ENCODE measurements at regions of chr20 and their contacts with region 1.

Region 1: DNA sequence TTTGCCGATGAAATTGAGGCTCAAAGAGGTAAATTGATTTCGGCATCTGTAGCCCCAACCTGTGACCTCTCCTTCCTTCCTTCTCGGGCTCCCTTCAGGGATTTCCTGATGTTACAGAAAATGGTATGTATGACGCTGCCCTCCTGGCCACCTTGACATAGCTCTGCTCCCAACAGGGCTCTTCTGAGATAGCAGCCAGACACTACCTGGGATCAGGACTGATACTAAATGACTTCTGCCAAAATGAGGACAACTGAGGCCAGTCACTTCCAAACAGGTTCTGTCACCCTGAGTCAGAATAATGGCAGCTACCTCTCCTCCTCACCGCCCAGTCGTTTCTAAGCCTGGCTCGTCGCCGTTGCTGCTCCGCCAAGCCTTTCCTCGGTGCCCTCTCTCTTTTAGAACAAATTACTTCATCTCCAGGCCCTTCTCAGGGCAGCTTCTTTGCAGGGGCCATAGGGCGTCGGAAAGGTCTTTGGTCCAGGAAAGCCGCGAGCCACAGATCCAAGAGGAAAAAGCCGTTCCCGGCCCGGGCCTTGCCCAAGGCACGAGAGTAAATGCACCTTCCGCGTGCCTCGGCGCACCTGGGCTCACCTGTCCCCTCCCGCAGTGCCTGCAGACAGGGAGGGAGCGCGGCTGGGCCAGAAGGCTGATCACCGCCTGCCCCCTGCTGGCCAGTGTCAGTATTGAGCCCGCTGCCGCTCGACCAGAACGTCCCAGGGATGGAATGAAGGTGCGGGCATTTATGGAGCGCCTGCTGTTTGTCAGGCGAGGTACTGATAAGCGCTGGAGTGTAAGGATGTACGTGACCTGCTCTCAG is 904 bp upstream of the LPIN3 start:
- DNase-seq: peak; percentile 81 to 94 (median 93)
- ATAC-seq: peak; percentile 81 to 82
- H3K4me3 ChIP-seq: peak overlapping the region; percentile 27
- H3K27ac ChIP-seq: peak overlapping the region; percentile 82
- H3K4me1 ChIP-seq: no peaks in the 10 kb centered on the region
- H3K27me3 ChIP-seq: no peaks in the 10 kb centered on the region

Region 2: GRCh38 chr20:40962730-40963504 is 376.8 kb before region 1 on chr20:
- intact Hi-C with region 1: loop called in 1 of 4 experiments (anchors 10 kb)
- DNase-seq: peak; percentile 59 to 80 (median 74)
- ATAC-seq: peak; percentile 75 to 78
- H3K4me3 ChIP-seq: no peak overlapping the region
- H3K27ac ChIP-seq: no peak overlapping the region
- H3K4me1 ChIP-seq: no peaks in the 10 kb centered on the region
- H3K27me3 ChIP-seq: no peaks in the 10 kb centered on the region

Region 3: DNA sequence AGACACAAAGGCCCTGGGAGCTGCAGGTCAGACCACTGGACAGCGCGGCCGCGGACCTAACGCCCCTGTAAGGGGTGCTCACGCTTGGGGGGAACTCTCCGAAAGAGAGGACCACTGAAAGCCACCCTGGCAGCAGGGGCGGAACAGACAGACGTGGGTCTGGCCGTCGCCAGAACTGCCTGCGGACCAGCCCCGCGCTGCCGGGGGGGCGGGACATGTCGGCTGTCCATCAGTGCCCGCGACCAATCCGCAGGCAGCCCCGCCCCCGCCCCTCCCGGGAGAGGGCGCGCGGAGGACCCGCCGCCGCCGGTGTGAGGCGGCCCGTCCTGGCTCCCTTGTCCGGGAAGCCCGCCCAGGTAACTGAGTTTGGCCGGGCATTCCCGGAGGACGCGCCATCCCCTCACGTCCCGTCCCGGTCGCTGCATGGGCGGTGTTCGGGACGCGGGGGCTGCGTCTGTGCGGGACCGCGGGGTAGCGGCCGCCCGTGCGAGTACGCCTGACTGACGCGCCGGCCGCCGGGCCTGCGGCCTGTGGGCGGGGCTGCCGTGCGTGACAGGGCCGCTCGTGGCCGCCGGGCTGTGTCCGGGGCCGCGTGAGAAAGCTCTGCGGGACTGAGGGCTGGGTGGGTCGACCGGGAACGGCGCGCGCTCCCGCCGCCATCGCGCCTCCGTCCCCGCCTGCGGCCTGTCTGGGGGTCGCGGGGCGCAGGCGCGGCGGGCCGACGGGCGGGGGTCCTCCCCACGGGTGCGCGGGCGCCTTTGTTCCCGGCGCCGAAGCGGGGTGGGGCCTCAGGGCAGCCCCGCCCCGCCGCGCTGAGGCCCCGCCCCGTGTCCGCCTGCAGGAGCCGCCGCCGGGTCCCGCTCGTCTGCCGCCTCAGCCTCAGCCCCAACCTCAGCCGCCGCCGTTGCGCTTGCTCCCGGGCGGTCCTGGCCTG is 202.8 kb before region 1 on chr20 and contains the start of gene PLCG1:
- intact Hi-C with region 1: loop called in 2 of 4 experiments (anchors 5 to 10 kb)
- DNase-seq: peak; percentile 92 to 97 (median 96)
- ATAC-seq: peak; percentile 83 to 88
- H3K4me3 ChIP-seq: peak within 1 kb of the TSS; percentile 83
- H3K27ac ChIP-seq: peak within 1 kb of the TSS; percentile 95
- H3K4me1 ChIP-seq: peaks cover 22% of the 10 kb centered on the region
- H3K27me3 ChIP-seq: no peaks in the 10 kb centered on the region
- total RNA-seq, gene PLCG1: 50.1 to 62.2 (median 58.3) TPM

Region 4: DNA sequence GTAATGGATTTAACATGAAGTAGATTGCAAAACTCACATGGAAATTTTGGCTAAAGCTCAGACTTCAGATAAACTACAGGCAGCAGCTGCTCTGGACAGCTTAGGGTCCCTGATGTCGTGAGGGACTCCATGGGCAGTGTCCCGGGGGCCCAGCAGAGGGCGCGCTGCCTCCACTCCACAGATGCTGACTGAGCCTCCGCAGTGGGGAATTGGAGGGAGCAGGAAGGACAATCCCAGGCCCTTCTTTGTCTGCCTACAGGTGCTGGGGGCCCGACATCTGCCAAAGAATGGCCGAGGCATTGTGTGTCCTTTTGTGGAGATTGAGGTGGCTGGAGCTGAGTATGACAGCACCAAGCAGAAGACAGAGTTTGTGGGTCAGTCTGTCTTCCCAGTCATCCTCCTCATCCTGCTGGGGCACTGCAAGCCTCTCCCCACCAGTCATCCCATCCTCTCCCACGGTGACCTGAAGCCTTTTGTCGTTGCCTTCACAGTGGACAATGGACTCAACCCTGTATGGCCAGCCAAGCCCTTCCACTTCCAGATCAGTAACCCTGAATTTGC is 166.5 kb before region 1 on chr20:
- intact Hi-C with region 1: loop called (anchors 2 to 5 kb)
- DNase-seq: peak; percentile 88 to 95 (median 95)
- ATAC-seq: peak; percentile 86 to 90
- H3K4me3 ChIP-seq: no peak overlapping the region
- H3K27ac ChIP-seq: peak overlapping the region; percentile 40
- H3K4me1 ChIP-seq: peaks cover 22% of the 10 kb centered on the region
- H3K27me3 ChIP-seq: no peaks in the 10 kb centered on the region

Region 5: DNA sequence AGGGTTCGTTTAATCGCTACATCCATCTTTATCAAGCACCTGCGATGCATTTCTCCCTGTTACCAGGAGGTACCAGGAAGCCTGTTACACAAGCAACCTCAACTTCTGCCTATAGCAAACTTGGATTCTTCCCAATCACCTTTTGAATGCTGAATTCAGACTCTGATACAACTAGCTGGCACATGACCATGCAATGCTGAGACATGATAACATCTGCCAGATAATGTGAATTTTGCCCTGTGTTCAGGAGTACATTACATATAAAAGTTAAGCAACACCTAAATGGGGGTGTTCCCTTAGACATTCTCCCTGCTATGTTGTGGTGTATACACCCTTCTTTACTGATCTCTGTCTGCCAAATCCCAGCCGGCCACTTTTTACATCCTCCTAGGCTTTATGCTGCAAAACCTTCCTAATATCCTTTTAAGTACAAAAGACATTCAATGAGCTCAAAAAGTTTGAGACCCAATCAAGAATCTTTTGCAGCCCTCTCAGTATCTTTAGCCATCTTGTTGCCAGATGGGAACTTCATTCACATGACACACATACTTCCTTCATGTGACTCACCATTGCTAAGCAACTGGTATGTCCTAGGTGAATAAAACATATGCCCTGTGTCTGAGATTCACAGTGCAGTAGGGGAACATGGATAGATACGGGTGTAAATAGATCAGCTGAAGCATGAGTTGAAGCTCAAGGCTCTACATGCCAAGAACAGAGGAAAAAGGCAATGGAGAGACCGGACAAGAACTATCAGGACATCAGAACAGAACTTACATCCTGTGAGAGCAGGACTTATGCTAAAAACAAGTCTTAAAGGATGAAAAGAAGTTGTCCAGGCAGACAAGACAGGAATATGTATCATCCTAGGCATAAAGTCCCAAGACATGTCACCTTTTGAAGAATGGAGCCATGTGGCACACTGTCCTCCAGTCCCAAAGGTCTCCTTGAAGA is 106.5 kb before region 1 on chr20:
- intact Hi-C with region 1: loop called in 1 of 4 experiments (anchors 5 kb)
- DNase-seq: no peak
- ATAC-seq: peak; percentile 14 to 53
- H3K4me3 ChIP-seq: no peak overlapping the region
- H3K27ac ChIP-seq: peak overlapping the region; percentile 90
- H3K4me1 ChIP-seq: peaks cover 20% of the 10 kb centered on the region
- H3K27me3 ChIP-seq: no peaks in the 10 kb centered on the region

Region 6: DNA sequence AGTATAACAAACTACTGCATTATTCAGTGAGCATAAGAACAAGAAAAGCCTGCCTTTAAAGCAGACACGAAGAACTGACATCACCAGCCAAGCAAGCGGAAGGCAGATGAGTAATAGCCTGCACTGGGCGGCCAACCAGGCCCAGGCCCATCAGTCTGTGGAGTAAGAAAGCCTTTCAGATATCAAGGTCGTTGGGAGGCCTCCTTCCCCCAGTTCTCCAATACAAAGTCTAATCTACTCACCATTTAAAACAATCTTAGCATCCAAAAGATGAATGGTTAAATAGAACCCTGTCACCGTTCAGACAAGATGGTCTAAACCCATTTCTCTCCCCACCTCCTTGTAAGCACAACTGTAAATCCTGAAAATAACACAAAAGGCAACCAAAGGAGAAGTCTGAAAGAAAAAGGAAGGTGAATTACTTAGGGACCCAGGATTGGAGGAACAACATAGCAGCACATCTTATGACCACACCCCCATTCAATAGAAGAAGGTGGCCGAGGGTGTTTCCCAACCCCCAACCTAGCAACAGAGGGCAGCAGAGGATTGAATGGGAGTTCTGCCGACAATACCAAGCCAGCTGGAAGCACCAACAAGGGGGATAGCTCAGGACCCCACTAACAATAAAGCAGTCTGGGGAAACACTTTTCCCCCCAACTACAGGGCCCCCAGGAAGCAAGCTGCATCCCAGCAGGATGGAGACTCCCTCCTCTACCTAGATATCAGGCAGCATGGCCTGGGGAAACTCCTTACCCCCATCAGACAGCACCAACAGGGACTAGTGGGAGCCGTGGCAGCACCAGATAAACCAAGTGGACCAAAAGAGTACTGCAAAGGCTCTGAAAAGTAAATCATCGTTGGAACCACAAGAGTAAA is 90.1 kb before region 1 on chr20:
- intact Hi-C with region 1: loop called in 3 of 4 experiments (anchors 10 kb)
- DNase-seq: peak; percentile 87 to 92 (median 87)
- ATAC-seq: peak; percentile 88 to 93
- H3K4me3 ChIP-seq: no peak overlapping the region
- H3K27ac ChIP-seq: peak overlapping the region; percentile 98
- H3K4me1 ChIP-seq: peaks cover 30% of the 10 kb centered on the region
- H3K27me3 ChIP-seq: no peaks in the 10 kb centered on the region

Region 7: DNA sequence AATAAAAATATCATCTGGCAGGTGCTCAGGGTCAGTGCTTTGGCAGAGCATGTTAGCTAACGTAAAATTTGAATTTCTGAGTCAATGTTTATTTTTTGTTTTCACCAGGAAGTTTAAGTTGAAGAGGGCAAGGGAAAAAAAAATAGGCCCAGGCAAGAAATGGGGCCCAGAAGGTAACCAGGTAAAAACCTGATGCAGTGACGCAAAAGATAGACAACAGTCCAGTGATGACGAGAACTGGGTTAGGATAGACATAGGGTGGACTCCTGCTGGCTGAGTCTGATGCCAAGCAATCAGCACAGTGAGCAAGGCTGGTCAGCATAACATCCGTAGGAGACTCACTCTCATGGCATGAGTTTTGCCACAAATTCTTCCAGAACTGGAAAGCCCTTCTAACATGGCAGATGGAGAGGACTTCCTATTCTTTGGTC is 64.4 kb before region 1 on chr20:
- intact Hi-C with region 1: no loop called
- DNase-seq: no peak
- ATAC-seq: peak in 1 of 2 donors; percentile 31
- H3K4me3 ChIP-seq: no peak overlapping the region
- H3K27ac ChIP-seq: no peak overlapping the region
- H3K4me1 ChIP-seq: peaks cover 10% of the 10 kb centered on the region
- H3K27me3 ChIP-seq: no peaks in the 10 kb centered on the region

Region 8: GRCh38 chr20:41287327-41287726 is 52.4 kb before region 1 on chr20:
- intact Hi-C with region 1: no loop called
- DNase-seq: no peak
- ATAC-seq: peak in 1 of 2 donors; percentile 14
- H3K4me3 ChIP-seq: no peak overlapping the region
- H3K27ac ChIP-seq: no peak overlapping the region
- H3K4me1 ChIP-seq: peaks cover 2% of the 10 kb centered on the region
- H3K27me3 ChIP-seq: no peaks in the 10 kb centered on the region

Region 9: GRCh38 chr20:41411391-41411847 is 71.7 kb after region 1 on chr20:
- intact Hi-C with region 1: loop called in 2 of 4 experiments (anchors 5 to 10 kb)
- DNase-seq: no peak
- ATAC-seq: peak; percentile 40 to 55
- H3K4me3 ChIP-seq: no peak overlapping the region
- H3K27ac ChIP-seq: no peak overlapping the region
- H3K4me1 ChIP-seq: peaks cover 2% of the 10 kb centered on the region
- H3K27me3 ChIP-seq: no peaks in the 10 kb centered on the region

Measured in right cardiac atrium (tissue), 5 donors.